PC-9 (cell line): ENCODE measurements at regions of chr2 and their contacts with region 1.

Region 1: DNA sequence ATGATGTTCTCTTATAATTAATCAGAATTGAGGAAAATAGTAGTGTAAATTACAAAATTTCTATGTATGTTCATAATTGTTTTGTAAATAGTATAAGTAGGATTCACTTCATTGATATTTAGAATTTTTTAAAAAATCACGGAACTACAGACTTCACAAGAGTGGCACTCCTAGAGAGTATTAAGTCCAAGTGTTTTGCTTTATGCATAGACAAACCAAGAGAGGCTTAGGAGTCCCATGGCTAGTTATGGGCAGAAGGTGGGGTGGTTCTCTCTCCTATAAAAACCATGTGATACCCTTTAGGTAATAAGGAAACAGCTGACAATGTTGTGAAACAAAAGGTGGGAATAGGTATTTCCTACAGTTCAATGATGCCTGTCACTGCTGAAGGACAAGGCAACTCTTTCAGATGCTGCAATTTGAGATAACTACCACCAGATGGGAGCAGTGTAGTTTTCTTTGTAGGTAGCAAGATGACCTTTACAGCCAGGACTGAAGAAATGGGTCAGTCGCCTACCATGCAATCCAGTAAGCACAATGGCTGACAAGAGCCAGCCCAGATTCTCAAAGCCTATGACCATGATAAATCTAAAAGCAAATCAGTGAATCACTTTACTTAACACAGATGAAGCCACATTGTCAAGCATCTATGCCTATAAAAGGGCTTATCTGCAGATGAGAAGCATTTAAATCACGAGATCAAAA is 83.9 kb downstream of the AAK1 start:
- DNase-seq: peak; percentile 19 to 76
- H3K4me3 ChIP-seq: no peak overlapping the region
- H3K27ac ChIP-seq: no peak overlapping the region
- H3K4me1 ChIP-seq: peaks cover 25% of the 10 kb centered on the region
- H3K27me3 ChIP-seq: no peaks in the 10 kb centered on the region
- CTCF ChIP-seq: peak; percentile 83

Region 2: GRCh38 chr2:69499242-69499641 is 60.4 kb before region 1 on chr2:
- CTCF ChIA-PET with region 1: no interaction called
- POLR2A ChIA-PET with region 1: no interaction called
- intact Hi-C with region 1: no loop called
- DNase-seq: no peak
- H3K4me3 ChIP-seq: no peak overlapping the region
- H3K27ac ChIP-seq: no peak overlapping the region
- H3K4me1 ChIP-seq: no peaks in the 10 kb centered on the region
- H3K27me3 ChIP-seq: no peaks in the 10 kb centered on the region
- CTCF ChIP-seq: no peak

Region 3: GRCh38 chr2:69816923-69817542 is 257.4 kb after region 1 on chr2:
- CTCF ChIA-PET with region 1: no interaction called
- POLR2A ChIA-PET with region 1: no interaction called
- intact Hi-C with region 1: loop called (anchors 2 kb)
- DNase-seq: peak; percentile 59 to 81
- H3K4me3 ChIP-seq: no peak overlapping the region
- H3K27ac ChIP-seq: no peak overlapping the region
- H3K4me1 ChIP-seq: no peaks in the 10 kb centered on the region
- H3K27me3 ChIP-seq: no peaks in the 10 kb centered on the region
- CTCF ChIP-seq: peak; percentile 96